Activated naive CD4-positive, alpha-beta T cell treated with anti-CD3 and anti-CD28 coated beads for 36 hours (primary cell): ENCODE measurements at regions of chr4 and their contacts with region 1.

Region 1: DNA sequence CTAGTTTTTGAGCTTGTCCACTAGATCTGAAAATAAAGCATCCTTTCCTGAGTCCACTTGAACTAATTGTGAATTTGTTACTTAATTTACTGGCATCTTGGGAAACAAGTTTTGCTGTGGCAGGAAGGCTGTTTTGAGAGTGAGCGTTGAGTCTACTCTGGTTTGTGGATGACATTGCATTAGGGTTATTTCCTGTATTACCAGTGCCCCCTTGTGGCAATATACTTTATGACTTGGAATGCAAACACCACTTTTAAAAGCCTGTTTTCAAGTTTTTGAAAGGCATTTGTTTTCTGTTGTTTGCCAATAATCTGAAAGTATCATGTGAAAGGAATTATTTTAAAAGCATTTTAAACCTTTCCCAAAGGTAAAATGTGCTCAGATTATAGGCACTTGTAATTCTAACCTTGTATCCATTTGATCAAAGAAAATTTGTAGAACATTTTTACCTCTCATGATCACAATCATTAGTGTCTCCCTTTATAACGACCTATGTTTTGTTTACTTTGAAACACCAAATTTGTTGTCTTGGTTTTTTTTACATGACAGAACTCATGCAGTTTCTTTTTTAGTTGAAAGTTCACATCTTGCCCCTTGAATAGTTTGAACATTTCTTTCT is 18.0 kb upstream of the CYP2U1 start:
- DNase-seq: peak; percentile 47
- H3K4me3 Mint-ChIP-seq: no peak overlapping the region
- H3K27ac Mint-ChIP-seq: no peak overlapping the region
- H3K4me1 Mint-ChIP-seq: peaks cover 3% of the 10 kb centered on the region
- H3K27me3 Mint-ChIP-seq: no peaks in the 10 kb centered on the region

Region 2: DNA sequence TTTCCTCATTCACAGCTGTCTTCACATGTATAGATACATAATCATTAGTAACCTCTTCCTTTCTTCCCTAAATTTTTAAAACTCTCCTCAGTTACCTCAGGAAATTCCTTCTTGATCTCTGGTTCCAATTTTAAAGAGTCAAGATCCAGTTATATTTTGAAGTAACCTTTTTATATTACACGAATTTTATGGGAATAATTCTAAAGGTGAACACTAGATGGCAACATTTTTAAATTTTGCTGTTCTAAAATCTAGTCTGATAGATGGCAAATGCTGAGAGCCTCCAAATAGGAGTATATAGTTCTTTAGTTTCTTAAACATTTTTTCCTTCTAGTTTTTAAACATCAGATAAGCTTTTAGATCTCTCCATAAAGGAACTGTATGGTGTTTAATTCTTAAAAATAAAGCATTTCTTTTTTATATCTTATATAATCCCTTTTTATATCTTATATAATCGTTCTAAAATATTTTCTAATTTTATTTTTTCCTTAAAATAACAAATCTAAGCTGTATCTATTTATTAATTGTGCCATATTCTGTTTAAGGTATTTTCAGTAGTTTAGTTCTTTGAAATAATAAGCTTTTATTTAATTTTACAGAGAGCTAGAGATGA is 155.4 kb before region 1 on chr4:
- CTCF ChIA-PET with region 1: interaction called, 43 read pairs
- intact Hi-C with region 1: loop called (anchors 1 kb)
- DNase-seq: no peak
- H3K4me3 Mint-ChIP-seq: no peak overlapping the region
- H3K27ac Mint-ChIP-seq: no peak overlapping the region
- H3K4me1 Mint-ChIP-seq: peaks cover 6% of the 10 kb centered on the region
- H3K27me3 Mint-ChIP-seq: peaks cover 5% of the 10 kb centered on the region

Region 3: GRCh38 chr4:107824353-107825071 is 88.9 kb before region 1 on chr4 and contains the start of gene SGMS2:
- CTCF ChIA-PET with region 1: interaction called, 4 read pairs
- intact Hi-C with region 1: loop called (anchors 5 kb)
- DNase-seq: peak; percentile 85
- H3K4me3 Mint-ChIP-seq: peak within 1 kb of the TSS; percentile 78
- H3K27ac Mint-ChIP-seq: no peak within 1 kb of the TSS
- H3K4me1 Mint-ChIP-seq: peaks cover 9% of the 10 kb centered on the region
- H3K27me3 Mint-ChIP-seq: peaks cover 44% of the 10 kb centered on the region
- total RNA-seq, gene SGMS2: 0.07 TPM in 1 of 2 experiments, not detected in the other